ENCODE measurements at regions of chr20 and their contacts with region 1.

Region 1: GRCh38 chr20:22691369-22692118 is 107.2 kb upstream of the FOXA2 start:
- DNase-seq: peak; percentile 32
- ATAC-seq: peak; percentile 76
- H3K4me3 Mint-ChIP-seq: no peak overlapping the region
- H3K27ac Mint-ChIP-seq: no peak overlapping the region
- H3K4me1 Mint-ChIP-seq: no peaks in the 10 kb centered on the region
- H3K27me3 Mint-ChIP-seq: no peaks in the 10 kb centered on the region
- CTCF ChIP-seq: peak; percentile 82

Region 2: GRCh38 chr20:23245553-23246181 is 554.1 kb after region 1 on chr20:
- CTCF ChIA-PET with region 1: interaction called, 4 read pairs
- POLR2A ChIA-PET with region 1: no interaction called
- intact Hi-C with region 1: loop called (anchors 5 kb)
- DNase-seq: no peak
- ATAC-seq: no peak
- H3K4me3 Mint-ChIP-seq: no peak overlapping the region
- H3K27ac Mint-ChIP-seq: no peak overlapping the region
- H3K4me1 Mint-ChIP-seq: peaks cover 11% of the 10 kb centered on the region
- H3K27me3 Mint-ChIP-seq: peaks cover 7% of the 10 kb centered on the region
- CTCF ChIP-seq: no peak

Region 3: GRCh38 chr20:23340524-23340923 is 649.0 kb after region 1 on chr20:
- CTCF ChIA-PET with region 1: interaction called, 39 read pairs
- POLR2A ChIA-PET with region 1: no interaction called
- intact Hi-C with region 1: no loop called
- DNase-seq: no peak
- ATAC-seq: no peak
- H3K4me3 Mint-ChIP-seq: no peak overlapping the region
- H3K27ac Mint-ChIP-seq: no peak overlapping the region
- H3K4me1 Mint-ChIP-seq: no peaks in the 10 kb centered on the region
- H3K27me3 Mint-ChIP-seq: peaks cover 1% of the 10 kb centered on the region
- CTCF ChIP-seq: no peak

Measured in activated B cell treated with CpG ODN at 0.5 μM for 24 hours (primary cell).